ENCODE measurements at regions of chr17 and their contacts with region 1.

Region 1: GRCh38 chr17:15502369-15503112 is 35.1 kb upstream of the CDRT4 start:
- DNase-seq: peak; percentile 90 to 95 (median 91)
- ATAC-seq: peak; percentile 78 to 95 (median 91)
- H3K4me3 ChIP-seq: peak overlapping the region in 10 of 12 donors; percentile 10 to 56 (median 42)
- H3K27ac ChIP-seq: peak overlapping the region; percentile 61 to 85 (median 78)
- H3K4me1 ChIP-seq: peaks cover 0 to 17% (median 11%) of the 10 kb centered on the region in 12 donors
- H3K27me3 ChIP-seq: no peaks in the 10 kb centered on the region
- CTCF ChIP-seq: peak; percentile 80 to 96 (median 91)
- POLR2A ChIP-seq: no peak

Region 2: DNA sequence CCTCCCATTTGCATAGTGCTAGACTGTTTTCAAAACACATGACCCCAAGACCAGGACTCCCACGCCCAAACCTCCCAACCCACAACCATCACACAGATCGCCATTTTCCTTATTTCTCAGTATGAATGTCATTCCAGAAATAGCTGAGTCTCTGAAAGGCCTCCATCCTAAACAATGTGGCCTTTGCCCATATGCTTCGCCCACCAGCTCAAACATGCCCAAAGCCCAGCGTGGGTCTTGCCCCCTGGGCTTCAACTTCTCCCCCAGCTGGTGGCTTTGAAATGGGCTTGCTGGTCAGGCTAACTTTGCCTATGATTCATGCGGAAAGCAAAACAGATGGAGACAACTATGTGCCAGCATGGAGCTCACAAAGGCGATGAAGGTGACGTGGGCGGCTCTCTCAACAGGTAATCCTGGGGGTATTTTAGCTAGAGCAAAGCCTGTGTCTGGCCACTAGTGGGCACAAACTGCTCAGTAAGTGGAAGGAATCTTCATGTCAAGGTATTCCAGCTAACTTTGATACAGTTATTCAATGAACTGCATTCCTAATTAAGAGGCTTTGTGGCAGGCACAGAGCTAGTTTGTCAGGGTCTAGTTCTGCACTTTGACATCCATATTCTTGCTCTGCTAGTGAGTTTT is 254.5 kb before region 1 on chr17:
- intact Hi-C with region 1: no loop called
- DNase-seq: no peak
- ATAC-seq: no peak
- H3K4me3 ChIP-seq: no peak overlapping the region
- H3K27ac ChIP-seq: peak overlapping the region in 11 of 12 donors; percentile 43 to 81 (median 65)
- H3K4me1 ChIP-seq: peaks cover 5 to 84% (median 69%) of the 10 kb centered on the region in 12 donors
- H3K27me3 ChIP-seq: no peaks in the 10 kb centered on the region
- CTCF ChIP-seq: peak in 6 of 12 donors; percentile 12 to 37 (median 24)
- POLR2A ChIP-seq: no peak

Region 3: DNA sequence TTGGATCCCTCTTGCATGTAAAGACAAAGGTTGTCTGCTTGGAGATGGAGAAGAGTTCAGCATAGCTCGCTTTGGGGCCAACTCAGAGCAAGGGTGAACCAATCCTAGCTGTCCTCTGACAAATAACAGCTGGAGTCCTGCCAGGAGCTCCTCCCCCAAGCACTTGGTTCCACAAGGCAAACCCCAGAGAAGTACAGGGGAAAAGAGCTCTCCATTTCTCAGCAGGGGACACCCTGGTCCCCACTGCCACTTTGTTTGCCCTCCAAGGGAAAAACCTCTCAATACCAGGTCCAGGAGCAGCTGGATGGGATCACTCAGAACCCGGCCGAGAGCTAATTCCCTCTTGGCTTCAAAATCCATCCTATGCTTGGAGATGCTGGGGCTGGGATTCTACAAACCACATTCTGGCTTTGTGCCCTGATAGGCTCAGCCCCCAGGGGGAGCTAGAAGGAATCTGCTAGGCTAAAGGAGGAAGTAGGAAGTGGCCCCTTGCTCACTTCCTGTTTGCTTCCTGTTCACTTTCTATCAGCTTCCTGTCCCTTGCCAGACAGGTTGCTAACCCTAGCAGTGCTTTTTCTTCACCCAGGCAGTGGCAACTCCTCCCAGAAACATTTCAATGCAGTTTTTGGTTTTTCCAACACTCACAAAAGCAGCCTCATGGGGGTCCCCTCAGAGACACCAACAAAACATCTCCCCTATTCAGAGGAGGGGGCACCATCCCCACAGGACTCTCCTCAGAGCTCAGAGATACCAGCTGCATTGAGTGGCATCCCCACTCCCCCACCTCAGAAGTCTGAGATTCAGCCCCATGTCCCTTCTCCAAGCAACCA is 65.9 kb before region 1 on chr17:
- intact Hi-C with region 1: loop called in 2 of 10 experiments (anchors 5 to 10 kb)
- DNase-seq: peak; percentile 71 to 91 (median 76)
- ATAC-seq: peak; percentile 58 to 66 (median 62)
- H3K4me3 ChIP-seq: no peak overlapping the region
- H3K27ac ChIP-seq: peak overlapping the region; percentile 11 to 85 (median 75)
- H3K4me1 ChIP-seq: peaks cover 7 to 58% (median 23%) of the 10 kb centered on the region in 12 donors
- H3K27me3 ChIP-seq: no peaks in the 10 kb centered on the region
- CTCF ChIP-seq: peak in 11 of 12 donors; percentile 19 to 54 (median 46)
- POLR2A ChIP-seq: peak in 1 of 2 donors; percentile 24

Region 4: GRCh38 chr17:15456972-15457722 is 45.4 kb before region 1 on chr17:
- intact Hi-C with region 1: loop called in 3 of 10 experiments (anchors 2 to 5 kb)
- DNase-seq: peak; percentile 47 to 76 (median 57)
- ATAC-seq: peak; percentile 56 to 72 (median 68)
- H3K4me3 ChIP-seq: peak overlapping the region in 3 of 12 donors; percentile 5 to 23 (median 5)
- H3K27ac ChIP-seq: peak overlapping the region; percentile 47 to 87 (median 78)
- H3K4me1 ChIP-seq: peaks cover 0 to 36% (median 18%) of the 10 kb centered on the region in 12 donors
- H3K27me3 ChIP-seq: no peaks in the 10 kb centered on the region
- CTCF ChIP-seq: peak in 9 of 12 donors; percentile 17 to 55 (median 36)
- POLR2A ChIP-seq: no peak

Measured in heart left ventricle (tissue), 16 donors.